Activated CD4-positive, alpha-beta memory T cell treated with anti-CD3 and anti-CD28 coated beads, Interleukin-2, amount 10 ng/mL, durations not matched to agents 7 days and 5 days (primary cell): ENCODE measurements at regions of chr2 and their contacts with region 1.

Region 1: GRCh38 chr2:195656859-195657633 is at the start of gene SLC39A10:
- DNase-seq: peak; percentile 99
- H3K4me3 Mint-ChIP-seq: peak within 1 kb of the TSS; percentile 97
- H3K27ac Mint-ChIP-seq: peak within 1 kb of the TSS; percentile 98
- H3K4me1 Mint-ChIP-seq: peaks cover 21% of the 10 kb centered on the region
- H3K27me3 Mint-ChIP-seq: no peaks in the 10 kb centered on the region
- total RNA-seq, gene SLC39A10: 43.2 to 47.0 TPM

Region 2: DNA sequence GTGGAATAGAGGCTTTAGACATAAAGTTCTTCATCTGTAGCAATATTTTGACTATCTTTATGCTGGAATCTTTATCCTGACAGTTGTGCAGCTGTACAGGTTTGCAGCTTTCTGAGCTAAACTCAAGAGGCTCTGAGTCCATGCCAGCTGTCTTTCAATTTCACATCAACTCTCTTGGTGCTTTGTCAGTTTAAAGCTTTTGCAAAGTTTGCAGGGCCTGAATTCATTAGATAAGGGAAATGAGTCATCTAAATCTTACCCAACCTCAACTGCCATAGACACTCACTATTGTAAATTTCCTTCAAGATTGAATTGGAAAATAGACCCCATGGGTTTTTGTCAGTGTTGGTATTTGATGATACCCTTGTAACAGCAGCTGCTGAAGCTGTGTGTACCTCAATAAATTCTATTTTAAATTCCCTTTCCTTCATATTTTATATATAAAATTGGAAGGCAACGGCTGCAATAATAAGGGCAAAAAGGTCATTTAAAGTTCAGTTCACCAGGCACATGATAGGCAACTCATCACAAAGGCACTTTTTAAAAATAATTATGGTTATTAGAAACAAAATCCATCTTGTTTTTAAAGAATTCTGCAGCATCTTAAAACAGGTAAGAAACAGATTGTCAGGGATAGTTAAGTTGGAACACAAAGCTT is 169.9 kb before region 1 on chr2:
- CTCF ChIA-PET with region 1: interaction called, 15 read pairs
- POLR2A ChIA-PET with region 1: interaction called, 52 read pairs
- DNase-seq: peak; percentile 30
- H3K4me3 Mint-ChIP-seq: peak overlapping the region; percentile 38
- H3K27ac Mint-ChIP-seq: peak overlapping the region; percentile 84
- H3K4me1 Mint-ChIP-seq: peaks cover 35% of the 10 kb centered on the region
- H3K27me3 Mint-ChIP-seq: no peaks in the 10 kb centered on the region

Region 3: GRCh38 chr2:195533771-195534642 is 123.0 kb before region 1 on chr2:
- CTCF ChIA-PET with region 1: interaction called, 61 read pairs
- POLR2A ChIA-PET with region 1: interaction called, 408 read pairs
- DNase-seq: peak; percentile 77
- H3K4me3 Mint-ChIP-seq: peak overlapping the region; percentile 80
- H3K27ac Mint-ChIP-seq: peak overlapping the region; percentile 95
- H3K4me1 Mint-ChIP-seq: peaks cover 80% of the 10 kb centered on the region
- H3K27me3 Mint-ChIP-seq: no peaks in the 10 kb centered on the region

Region 4: GRCh38 chr2:195552581-195552980 is 104.5 kb before region 1 on chr2:
- CTCF ChIA-PET with region 1: interaction called, 3 read pairs
- POLR2A ChIA-PET with region 1: interaction called, 323 read pairs
- DNase-seq: no peak
- H3K4me3 Mint-ChIP-seq: peak overlapping the region; percentile 44
- H3K27ac Mint-ChIP-seq: peak overlapping the region; percentile 79
- H3K4me1 Mint-ChIP-seq: peaks cover 59% of the 10 kb centered on the region
- H3K27me3 Mint-ChIP-seq: no peaks in the 10 kb centered on the region

Region 5: GRCh38 chr2:195575879-195576401 is 81.1 kb before region 1 on chr2:
- CTCF ChIA-PET with region 1: interaction called, 18 read pairs
- POLR2A ChIA-PET with region 1: interaction called, 17 read pairs
- DNase-seq: no peak
- H3K4me3 Mint-ChIP-seq: no peak overlapping the region
- H3K27ac Mint-ChIP-seq: no peak overlapping the region
- H3K4me1 Mint-ChIP-seq: peaks cover 41% of the 10 kb centered on the region
- H3K27me3 Mint-ChIP-seq: no peaks in the 10 kb centered on the region